ENCODE measurements at regions of chr12 and their contacts with region 1.

Region 1: DNA sequence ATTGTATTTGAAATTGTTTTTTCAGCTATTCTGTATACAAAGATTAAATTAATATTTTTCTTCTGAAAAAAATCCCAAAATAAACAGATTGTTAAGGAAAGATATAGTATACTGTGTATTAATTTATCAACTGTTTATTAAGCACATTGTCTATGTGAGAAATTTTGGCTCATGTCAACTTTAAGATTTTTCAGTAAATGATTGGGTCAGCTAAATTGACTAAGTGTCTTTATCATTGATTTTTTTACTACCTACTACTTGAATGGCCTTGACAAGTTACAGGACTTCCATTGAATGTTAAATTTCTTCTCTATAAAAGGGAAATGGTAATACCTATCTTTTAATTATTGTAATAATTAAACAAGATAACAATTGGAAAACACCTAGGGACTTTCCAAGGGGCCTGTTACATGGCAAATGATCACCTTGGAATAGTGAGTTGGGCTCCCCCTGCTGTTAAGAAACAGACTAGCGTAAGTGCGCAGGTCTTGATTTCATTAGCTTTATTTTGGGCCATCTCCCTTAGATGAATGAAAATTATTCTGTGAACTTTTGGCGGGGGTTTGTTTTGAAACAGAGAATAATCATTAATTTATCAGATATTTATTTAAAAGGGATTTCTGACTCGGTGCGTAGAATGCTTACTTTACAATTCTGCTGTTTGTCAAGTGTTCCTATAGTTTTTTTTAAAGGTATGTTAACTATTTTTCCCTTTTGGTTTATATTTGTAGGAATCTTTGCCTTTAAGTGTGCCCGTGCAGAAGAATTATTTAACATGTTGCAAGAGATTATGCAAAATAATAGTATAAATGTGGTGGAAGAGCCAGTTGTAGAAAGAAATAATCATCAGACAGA is 14.5 kb upstream of the CCT2 start:
- DNase-seq: peak; percentile 63
- ATAC-seq: peak; percentile 53
- H3K4me3 Mint-ChIP-seq: no peak overlapping the region
- H3K27ac Mint-ChIP-seq: no peak overlapping the region
- H3K4me1 Mint-ChIP-seq: peaks cover 4% of the 10 kb centered on the region
- H3K27me3 Mint-ChIP-seq: no peaks in the 10 kb centered on the region

Region 2: GRCh38 chr12:69039894-69040293 is 530.9 kb before region 1 on chr12:
- CTCF ChIA-PET with region 1: no interaction called
- DNase-seq: no peak
- ATAC-seq: no peak
- H3K4me3 Mint-ChIP-seq: no peak overlapping the region
- H3K27ac Mint-ChIP-seq: no peak overlapping the region
- H3K4me1 Mint-ChIP-seq: no peaks in the 10 kb centered on the region
- H3K27me3 Mint-ChIP-seq: peaks cover 9% of the 10 kb centered on the region

Region 3: GRCh38 chr12:69359531-69360347 is 211.0 kb before region 1 on chr12 and contains the start of gene YEATS4:
- CTCF ChIA-PET with region 1: interaction called, 59 read pairs
- DNase-seq: peak; percentile 95
- ATAC-seq: peak; percentile 87
- H3K4me3 Mint-ChIP-seq: peak within 1 kb of the TSS; percentile 97
- H3K27ac Mint-ChIP-seq: peak within 1 kb of the TSS; percentile 95
- H3K4me1 Mint-ChIP-seq: peaks cover 40% of the 10 kb centered on the region
- H3K27me3 Mint-ChIP-seq: peaks cover 2% of the 10 kb centered on the region
- total RNA-seq, gene YEATS4: 40.9 to 47.3 TPM

Region 4: DNA sequence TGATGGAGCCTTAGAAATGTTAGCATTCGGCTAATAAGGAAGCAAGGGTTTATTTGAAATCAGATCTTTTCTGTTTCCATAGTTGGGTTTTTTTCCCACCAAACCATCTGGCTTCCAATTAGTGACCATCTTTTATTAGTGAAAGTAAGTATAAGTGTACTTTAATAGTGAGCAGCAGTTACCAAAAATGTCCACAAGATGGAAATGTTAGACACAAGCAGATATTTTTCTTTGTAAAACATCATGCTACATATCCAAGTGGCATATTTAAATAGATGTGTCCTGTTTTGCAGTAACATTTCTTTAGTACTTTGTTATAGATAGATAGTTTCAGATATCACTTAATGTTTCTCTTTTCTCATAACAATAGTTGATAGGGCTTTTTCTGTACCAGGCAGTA is 182.4 kb before region 1 on chr12:
- CTCF ChIA-PET with region 1: interaction called, 14 read pairs
- DNase-seq: no peak
- ATAC-seq: no peak
- H3K4me3 Mint-ChIP-seq: no peak overlapping the region
- H3K27ac Mint-ChIP-seq: no peak overlapping the region
- H3K4me1 Mint-ChIP-seq: peaks cover 6% of the 10 kb centered on the region
- H3K27me3 Mint-ChIP-seq: no peaks in the 10 kb centered on the region

Region 5: DNA sequence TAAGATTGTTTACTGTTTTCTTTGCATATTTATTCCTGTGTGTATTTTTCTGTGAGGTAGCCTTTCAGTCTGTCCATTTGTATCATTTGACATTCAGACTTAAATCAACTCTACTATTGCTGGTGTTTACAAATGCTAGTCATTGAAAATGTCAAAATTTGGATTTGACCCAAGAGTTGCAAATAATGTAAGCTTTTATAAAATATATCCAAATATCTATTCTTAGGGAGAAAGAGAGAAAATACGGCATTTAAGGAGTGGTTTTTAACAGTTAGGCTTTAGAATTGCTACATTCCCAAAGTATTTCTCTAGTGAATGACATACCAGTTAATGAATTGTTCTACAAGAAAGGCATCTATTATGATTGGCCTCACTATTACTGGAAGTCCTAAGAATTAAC is 62.7 kb before region 1 on chr12:
- CTCF ChIA-PET with region 1: no interaction called
- DNase-seq: no peak
- ATAC-seq: no peak
- H3K4me3 Mint-ChIP-seq: no peak overlapping the region
- H3K27ac Mint-ChIP-seq: no peak overlapping the region
- H3K4me1 Mint-ChIP-seq: peaks cover 2% of the 10 kb centered on the region
- H3K27me3 Mint-ChIP-seq: no peaks in the 10 kb centered on the region

Region 6: DNA sequence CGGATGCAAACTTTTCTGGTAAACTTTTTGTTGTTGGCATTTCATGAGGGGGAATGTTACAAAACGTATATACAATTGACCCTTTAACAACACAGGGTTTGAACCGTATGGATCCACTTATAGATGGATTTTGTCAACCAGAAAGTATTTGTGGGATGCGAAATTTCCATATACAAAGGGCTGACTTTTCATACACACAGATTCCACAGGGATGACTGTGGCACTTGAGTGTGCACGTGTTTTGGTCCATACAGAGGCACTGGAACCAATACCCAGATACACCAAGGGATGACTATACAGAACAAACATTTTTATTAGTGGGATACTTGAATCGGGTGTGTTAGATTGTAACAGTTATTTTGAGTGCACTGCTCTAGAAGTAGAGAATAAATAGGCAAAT is 15.3 kb before region 1 on chr12:
- CTCF ChIA-PET with region 1: interaction called, 11 read pairs
- DNase-seq: no peak
- ATAC-seq: no peak
- H3K4me3 Mint-ChIP-seq: no peak overlapping the region
- H3K27ac Mint-ChIP-seq: no peak overlapping the region
- H3K4me1 Mint-ChIP-seq: no peaks in the 10 kb centered on the region
- H3K27me3 Mint-ChIP-seq: no peaks in the 10 kb centered on the region

Region 7: GRCh38 chr12:69585189-69586062 is 14.7 kb after region 1 on chr12 and contains the start of gene CCT2:
- CTCF ChIA-PET with region 1: interaction called, 26 read pairs
- DNase-seq: peak; percentile 97
- ATAC-seq: peak; percentile 94
- H3K4me3 Mint-ChIP-seq: peak within 1 kb of the TSS; percentile 89
- H3K27ac Mint-ChIP-seq: peak within 1 kb of the TSS; percentile 94
- H3K4me1 Mint-ChIP-seq: peaks cover 28% of the 10 kb centered on the region
- H3K27me3 Mint-ChIP-seq: no peaks in the 10 kb centered on the region
- total RNA-seq, gene CCT2: 193 to 271 TPM

Region 8: DNA sequence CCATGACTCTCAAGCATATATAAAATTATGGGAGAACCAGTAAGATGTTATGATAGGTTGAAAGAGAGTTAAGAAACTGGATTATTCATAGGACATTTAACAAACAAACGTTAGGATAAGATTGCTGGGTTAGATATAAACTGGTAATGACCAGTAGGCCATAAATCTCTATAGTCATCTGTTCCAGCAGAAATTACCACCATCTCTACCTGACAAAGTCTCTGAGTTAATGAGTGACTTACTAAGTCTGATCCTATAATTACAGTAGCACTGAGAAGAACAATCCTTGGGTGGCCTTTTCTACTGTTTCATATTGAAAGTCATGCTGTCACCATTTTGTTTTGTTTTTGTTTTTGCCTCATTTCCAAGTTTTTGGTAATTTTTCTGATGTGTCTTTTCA is 535.6 kb after region 1 on chr12:
- CTCF ChIA-PET with region 1: no interaction called
- DNase-seq: no peak
- ATAC-seq: no peak
- H3K4me3 Mint-ChIP-seq: no peak overlapping the region
- H3K27ac Mint-ChIP-seq: no peak overlapping the region
- H3K4me1 Mint-ChIP-seq: no peaks in the 10 kb centered on the region
- H3K27me3 Mint-ChIP-seq: peaks cover 10% of the 10 kb centered on the region

Measured in activated CD8-positive, alpha-beta memory T cell treated with anti-CD3 and anti-CD28 coated beads, Interleukin-2, amount 10 ng/mL, durations not matched to agents 7 days and 5 days (primary cell).